Spleen (tissue), 13 donors: ENCODE measurements at regions of chr2 and their contacts with region 1.

Region 1: GRCh38 chr2:26144953-26145680 is 27.8 kb upstream of the GAREM2 start:
- DNase-seq: peak; percentile 81
- H3K4me3 ChIP-seq: peak overlapping the region in 1 of 8 donors; percentile 9
- H3K27ac ChIP-seq: no peak overlapping the region
- H3K4me1 ChIP-seq: peaks cover 0 to 15% (median 5%) of the 10 kb centered on the region in 6 donors
- H3K27me3 ChIP-seq: peaks cover 0 to 23% (median 5%) of the 10 kb centered on the region in 7 donors
- CTCF ChIP-seq: peak; percentile 36 to 79 (median 73)
- POLR2A ChIP-seq: no peak

Region 2: GRCh38 chr2:25726522-25726921 is 418.6 kb before region 1 on chr2:
- intact Hi-C with region 1: no loop called
- DNase-seq: no peak
- H3K4me3 ChIP-seq: no peak overlapping the region
- H3K27ac ChIP-seq: no peak overlapping the region
- H3K4me1 ChIP-seq: no peaks in the 10 kb centered on the region
- H3K27me3 ChIP-seq: no peaks in the 10 kb centered on the region
- CTCF ChIP-seq: no peak
- POLR2A ChIP-seq: no peak

Region 3: GRCh38 chr2:25951071-25951547 is 194.0 kb before region 1 on chr2:
- intact Hi-C with region 1: loop called (anchors 5 kb)
- DNase-seq: peak; percentile 92
- H3K4me3 ChIP-seq: no peak overlapping the region
- H3K27ac ChIP-seq: no peak overlapping the region
- H3K4me1 ChIP-seq: peaks cover 0 to 12% (median 6%) of the 10 kb centered on the region in 6 donors
- H3K27me3 ChIP-seq: no peaks in the 10 kb centered on the region
- CTCF ChIP-seq: peak; percentile 76 to 95 (median 90)
- POLR2A ChIP-seq: no peak

Region 4: DNA sequence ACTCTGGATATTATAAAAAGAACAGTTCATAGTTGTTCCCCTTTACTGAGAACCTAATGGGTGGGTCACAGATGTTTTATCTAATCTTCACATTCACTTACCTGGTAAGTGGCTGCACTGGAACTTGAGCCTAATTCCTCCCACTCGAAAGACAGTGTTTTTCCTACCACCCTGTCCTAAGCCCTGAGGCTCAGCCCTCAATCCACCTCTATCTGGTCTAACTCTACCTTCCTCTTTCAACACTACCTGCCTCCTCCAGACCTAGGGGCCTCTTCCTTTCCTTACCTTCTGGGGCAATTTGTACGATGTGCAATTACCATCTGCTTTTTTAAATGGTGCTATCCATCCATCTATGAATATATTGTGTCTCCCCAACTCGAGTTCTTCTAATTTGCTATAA is 153.2 kb before region 1 on chr2:
- intact Hi-C with region 1: loop called (anchors 10 kb)
- DNase-seq: no peak
- H3K4me3 ChIP-seq: peak overlapping the region in 1 of 8 donors; percentile 64
- H3K27ac ChIP-seq: peak overlapping the region in 7 of 8 donors; percentile 12 to 81 (median 48)
- H3K4me1 ChIP-seq: peaks cover 0 to 23% (median 17%) of the 10 kb centered on the region in 6 donors
- H3K27me3 ChIP-seq: no peaks in the 10 kb centered on the region
- CTCF ChIP-seq: no peak
- POLR2A ChIP-seq: no peak